CD4-positive, alpha-beta memory T cell (primary cell): ENCODE measurements at regions of chr2 and their contacts with region 1.

Region 1: DNA sequence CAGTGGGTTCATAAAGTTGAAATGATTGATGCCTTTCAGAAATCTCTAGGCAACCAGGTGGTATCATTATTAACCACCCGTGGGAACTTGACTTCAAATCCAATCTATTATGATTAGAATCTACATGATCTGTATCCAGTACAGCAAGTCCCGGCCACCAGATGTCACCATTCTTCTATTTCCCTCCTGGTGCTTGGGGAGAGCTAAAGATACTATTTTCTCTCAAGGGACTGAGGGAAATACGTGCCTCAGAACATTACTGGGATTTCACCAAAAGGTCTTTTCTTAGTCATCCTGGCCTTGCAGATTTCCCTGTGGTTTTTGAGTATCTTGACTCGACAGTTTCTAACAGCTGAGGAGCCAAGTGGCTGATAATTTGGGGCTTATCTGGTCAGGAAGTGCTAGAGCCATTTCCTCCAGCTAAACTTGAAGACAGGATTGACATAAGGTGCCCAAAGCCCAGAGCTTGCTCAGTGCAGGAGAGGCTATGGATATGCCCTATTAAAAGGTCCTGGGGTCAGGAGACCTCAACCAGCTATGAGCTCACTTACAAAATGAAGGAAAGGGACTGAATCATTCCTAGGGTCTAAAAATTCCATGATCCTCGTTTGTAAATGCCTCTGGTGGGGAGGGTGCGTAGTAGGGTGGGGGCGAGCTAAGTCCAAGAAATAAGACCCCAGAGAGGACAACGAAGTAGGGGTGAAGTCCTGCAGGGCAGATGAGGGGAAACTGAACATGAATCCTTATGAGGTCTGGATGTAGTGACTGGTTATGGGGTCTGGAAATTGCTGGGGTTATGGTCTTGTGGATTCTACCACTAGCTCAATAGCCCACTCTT is 135.4 kb upstream of the MGAT5 start:
- DNase-seq: peak; percentile 80 to 90 (median 81)
- H3K4me3 ChIP-seq: no peak overlapping the region
- H3K4me3 Mint-ChIP-seq: peak overlapping the region; percentile 96 to 100 (median 99)
- H3K27ac ChIP-seq: no peak overlapping the region
- H3K27ac Mint-ChIP-seq: peak overlapping the region; percentile 49 to 99 (median 96)
- H3K4me1 ChIP-seq: peaks cover 36% of the 10 kb centered on the region
- H3K4me1 Mint-ChIP-seq: peaks cover 27 to 41% (median 33%) of the 10 kb centered on the region in 4 donors
- H3K27me3 ChIP-seq: no peaks in the 10 kb centered on the region
- H3K27me3 Mint-ChIP-seq: no peaks in the 10 kb centered on the region

Region 2: GRCh38 chr2:133652398-133652797 is 466.1 kb before region 1 on chr2:
- CTCF ChIA-PET with region 1: no interaction called
- POLR2A ChIA-PET with region 1: no interaction called
- intact Hi-C with region 1: no loop called
- DNase-seq: no peak
- H3K4me3 ChIP-seq: no peak overlapping the region
- H3K4me3 Mint-ChIP-seq: no peak overlapping the region
- H3K27ac ChIP-seq: no peak overlapping the region
- H3K27ac Mint-ChIP-seq: no peak overlapping the region
- H3K4me1 ChIP-seq: no peaks in the 10 kb centered on the region
- H3K4me1 Mint-ChIP-seq: no peaks in the 10 kb centered on the region
- H3K27me3 ChIP-seq: no peaks in the 10 kb centered on the region
- H3K27me3 Mint-ChIP-seq: no peaks in the 10 kb centered on the region

Region 3: GRCh38 chr2:133886735-133887660 is 231.5 kb before region 1 on chr2:
- CTCF ChIA-PET with region 1: interaction called, 12 read pairs
- POLR2A ChIA-PET with region 1: no interaction called
- intact Hi-C with region 1: loop called (anchors 2 kb)
- DNase-seq: peak; percentile 43 to 50 (median 50)
- H3K4me3 ChIP-seq: no peak overlapping the region
- H3K4me3 Mint-ChIP-seq: no peak overlapping the region
- H3K27ac ChIP-seq: no peak overlapping the region
- H3K27ac Mint-ChIP-seq: no peak overlapping the region
- H3K4me1 ChIP-seq: no peaks in the 10 kb centered on the region
- H3K4me1 Mint-ChIP-seq: peaks cover 0 to 2% (median under 1%) of the 10 kb centered on the region in 4 donors
- H3K27me3 ChIP-seq: no peaks in the 10 kb centered on the region
- H3K27me3 Mint-ChIP-seq: peaks cover 0 to 7% of the 10 kb centered on the region in 2 donors

Region 4: GRCh38 chr2:134198006-134198634 is 79.6 kb after region 1 on chr2:
- CTCF ChIA-PET with region 1: interaction called, 358 read pairs
- POLR2A ChIA-PET with region 1: interaction called, 98 read pairs
- intact Hi-C with region 1: no loop called
- DNase-seq: no peak
- H3K4me3 ChIP-seq: no peak overlapping the region
- H3K4me3 Mint-ChIP-seq: peak overlapping the region; percentile 18 to 82 (median 74)
- H3K27ac ChIP-seq: no peak overlapping the region
- H3K27ac Mint-ChIP-seq: peak overlapping the region; percentile 72 to 88 (median 83)
- H3K4me1 ChIP-seq: peaks cover 87% of the 10 kb centered on the region
- H3K4me1 Mint-ChIP-seq: peaks cover 73 to 94% (median 84%) of the 10 kb centered on the region in 4 donors
- H3K27me3 ChIP-seq: no peaks in the 10 kb centered on the region
- H3K27me3 Mint-ChIP-seq: no peaks in the 10 kb centered on the region

Region 5: GRCh38 chr2:134232868-134233727 is 114.6 kb after region 1 on chr2:
- CTCF ChIA-PET with region 1: interaction called, 233 read pairs
- POLR2A ChIA-PET with region 1: interaction called, 20 read pairs
- intact Hi-C with region 1: no loop called
- DNase-seq: peak; percentile 65 to 77 (median 69)
- H3K4me3 ChIP-seq: peak overlapping the region in 1 of 2 donors; percentile 30
- H3K4me3 Mint-ChIP-seq: peak overlapping the region; percentile 56 to 86 (median 78)
- H3K27ac ChIP-seq: peak overlapping the region; percentile 55
- H3K27ac Mint-ChIP-seq: peak overlapping the region; percentile 83 to 97 (median 92)
- H3K4me1 ChIP-seq: peaks cover 94% of the 10 kb centered on the region
- H3K4me1 Mint-ChIP-seq: peaks cover 75 to 94% (median 87%) of the 10 kb centered on the region in 4 donors
- H3K27me3 ChIP-seq: no peaks in the 10 kb centered on the region
- H3K27me3 Mint-ChIP-seq: no peaks in the 10 kb centered on the region

Region 6: DNA sequence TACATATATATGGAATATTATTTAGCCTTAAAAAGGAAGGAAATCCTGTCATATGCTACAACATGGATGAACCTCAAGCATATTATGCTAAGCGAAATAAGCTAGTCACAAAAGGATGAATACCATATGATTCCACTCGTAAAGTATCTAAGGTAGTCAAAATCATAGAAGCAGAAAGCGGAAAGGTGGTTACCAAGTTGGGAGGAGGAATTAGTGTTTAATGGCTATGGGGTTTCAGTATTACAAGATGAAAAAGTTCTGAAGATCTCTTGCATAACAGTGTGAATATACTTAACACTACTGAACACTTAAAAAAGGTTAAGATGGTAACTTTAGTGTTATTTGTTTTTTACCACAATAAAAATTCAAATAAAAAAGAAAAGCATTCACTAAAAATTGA is 234.3 kb after region 1 on chr2:
- CTCF ChIA-PET with region 1: no interaction called
- POLR2A ChIA-PET with region 1: no interaction called
- intact Hi-C with region 1: loop called (anchors 5 kb)
- DNase-seq: no peak
- H3K4me3 ChIP-seq: no peak overlapping the region
- H3K4me3 Mint-ChIP-seq: no peak overlapping the region
- H3K27ac ChIP-seq: no peak overlapping the region
- H3K27ac Mint-ChIP-seq: peak overlapping the region in 2 of 7 donors; percentile 53 to 65
- H3K4me1 ChIP-seq: no peaks in the 10 kb centered on the region
- H3K4me1 Mint-ChIP-seq: peaks cover 0 to 15% (median 9%) of the 10 kb centered on the region in 4 donors
- H3K27me3 ChIP-seq: no peaks in the 10 kb centered on the region
- H3K27me3 Mint-ChIP-seq: no peaks in the 10 kb centered on the region

Region 7: GRCh38 chr2:134454931-134455330 is 336.4 kb after region 1 on chr2:
- CTCF ChIA-PET with region 1: interaction called, 44 read pairs
- POLR2A ChIA-PET with region 1: interaction called, 4 read pairs
- intact Hi-C with region 1: loop called (anchors 1 kb)
- DNase-seq: no peak
- H3K4me3 ChIP-seq: no peak overlapping the region
- H3K4me3 Mint-ChIP-seq: peak overlapping the region in 1 of 8 donors; percentile 17
- H3K27ac ChIP-seq: no peak overlapping the region
- H3K27ac Mint-ChIP-seq: peak overlapping the region in 1 of 7 donors; percentile 46
- H3K4me1 ChIP-seq: no peaks in the 10 kb centered on the region
- H3K4me1 Mint-ChIP-seq: peaks cover 0 to 15% (median 0%) of the 10 kb centered on the region in 4 donors
- H3K27me3 ChIP-seq: no peaks in the 10 kb centered on the region
- H3K27me3 Mint-ChIP-seq: no peaks in the 10 kb centered on the region

Region 8: GRCh38 chr2:134918526-134919340 is 800.2 kb after region 1 on chr2 and contains the start of gene CCNT2:
- CTCF ChIA-PET with region 1: no interaction called
- POLR2A ChIA-PET with region 1: interaction called, 8 read pairs
- intact Hi-C with region 1: loop called (anchors 1 kb)
- DNase-seq: peak; percentile 99 to 100 (median 100)
- H3K4me3 ChIP-seq: peak within 1 kb of the TSS; percentile 68 to 94
- H3K4me3 Mint-ChIP-seq: peak within 1 kb of the TSS; percentile 90 to 99 (median 97)
- H3K27ac ChIP-seq: peak within 1 kb of the TSS; percentile 95
- H3K27ac Mint-ChIP-seq: peak within 1 kb of the TSS; percentile 93 to 99 (median 98)
- H3K4me1 ChIP-seq: peaks cover 52% of the 10 kb centered on the region
- H3K4me1 Mint-ChIP-seq: peaks cover 22 to 61% (median 43%) of the 10 kb centered on the region in 4 donors
- H3K27me3 ChIP-seq: no peaks in the 10 kb centered on the region
- H3K27me3 Mint-ChIP-seq: peaks cover 0 to 4% of the 10 kb centered on the region in 2 donors
- total RNA-seq, gene CCNT2: 75.4 to 80.6 TPM